ENCODE measurements at regions of chr3 and their contacts with region 1.

Region 1: DNA sequence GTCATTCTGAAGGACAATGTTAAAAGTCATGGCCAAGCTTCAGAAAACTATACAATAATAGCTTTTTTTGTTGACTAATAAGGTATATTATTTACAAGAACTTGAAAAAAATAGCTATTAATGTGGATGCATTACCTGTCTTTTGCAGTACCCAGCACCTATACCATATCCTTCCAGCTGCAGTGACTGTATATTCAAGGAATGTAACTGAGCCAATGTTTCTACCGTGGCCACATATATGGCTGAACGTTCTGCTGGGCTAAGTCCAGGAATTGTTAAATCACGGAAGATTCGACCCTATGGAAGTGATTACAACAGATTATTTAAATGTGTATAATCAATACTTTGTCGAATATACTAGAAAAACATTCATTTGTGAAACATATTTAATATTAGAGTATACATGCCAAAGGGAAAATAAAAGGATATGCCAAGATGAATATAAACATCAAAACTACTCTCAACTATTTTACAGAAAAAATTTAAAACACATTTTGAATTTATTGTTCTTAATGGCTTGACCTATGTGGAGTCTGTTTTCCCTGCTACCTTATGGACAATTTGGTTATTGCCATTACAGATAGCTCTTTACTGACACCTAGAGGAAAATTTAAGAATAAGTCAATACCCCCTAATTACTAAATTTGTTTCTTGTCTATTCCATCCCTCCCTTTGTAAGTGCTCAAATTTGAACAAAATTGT is 17.6 kb downstream of the ACAD11 start:
- DNase-seq: no peak
- ATAC-seq: peak in 1 of 2 donors; percentile 53
- H3K4me3 ChIP-seq: no peak overlapping the region
- H3K27ac ChIP-seq: no peak overlapping the region
- H3K4me1 ChIP-seq: no peaks in the 10 kb centered on the region
- H3K27me3 ChIP-seq: no peaks in the 10 kb centered on the region
- CTCF ChIP-seq: peak; percentile 52 to 84 (median 76)
- POLR2A ChIP-seq: no peak

Region 2: GRCh38 chr3:132535575-132536441 is 106.2 kb before region 1 on chr3:
- in situ Hi-C with region 1: loop called (anchors 5 to 10 kb)
- intact Hi-C with region 1: loop called (anchors 1 kb)
- DNase-seq: peak; percentile 30 to 38
- ATAC-seq: peak; percentile 66 to 80
- H3K4me3 ChIP-seq: no peak overlapping the region
- H3K27ac ChIP-seq: no peak overlapping the region
- H3K4me1 ChIP-seq: no peaks in the 10 kb centered on the region
- H3K27me3 ChIP-seq: no peaks in the 10 kb centered on the region
- CTCF ChIP-seq: peak; percentile 54 to 76 (median 61)
- POLR2A ChIP-seq: no peak

Region 3: GRCh38 chr3:132543036-132543739 is 98.8 kb before region 1 on chr3:
- in situ Hi-C with region 1: loop called (anchors 5 to 10 kb)
- intact Hi-C with region 1: no loop called
- DNase-seq: no peak
- ATAC-seq: no peak
- H3K4me3 ChIP-seq: no peak overlapping the region
- H3K27ac ChIP-seq: no peak overlapping the region
- H3K4me1 ChIP-seq: no peaks in the 10 kb centered on the region
- H3K27me3 ChIP-seq: no peaks in the 10 kb centered on the region
- CTCF ChIP-seq: no peak
- POLR2A ChIP-seq: no peak

Region 4: DNA sequence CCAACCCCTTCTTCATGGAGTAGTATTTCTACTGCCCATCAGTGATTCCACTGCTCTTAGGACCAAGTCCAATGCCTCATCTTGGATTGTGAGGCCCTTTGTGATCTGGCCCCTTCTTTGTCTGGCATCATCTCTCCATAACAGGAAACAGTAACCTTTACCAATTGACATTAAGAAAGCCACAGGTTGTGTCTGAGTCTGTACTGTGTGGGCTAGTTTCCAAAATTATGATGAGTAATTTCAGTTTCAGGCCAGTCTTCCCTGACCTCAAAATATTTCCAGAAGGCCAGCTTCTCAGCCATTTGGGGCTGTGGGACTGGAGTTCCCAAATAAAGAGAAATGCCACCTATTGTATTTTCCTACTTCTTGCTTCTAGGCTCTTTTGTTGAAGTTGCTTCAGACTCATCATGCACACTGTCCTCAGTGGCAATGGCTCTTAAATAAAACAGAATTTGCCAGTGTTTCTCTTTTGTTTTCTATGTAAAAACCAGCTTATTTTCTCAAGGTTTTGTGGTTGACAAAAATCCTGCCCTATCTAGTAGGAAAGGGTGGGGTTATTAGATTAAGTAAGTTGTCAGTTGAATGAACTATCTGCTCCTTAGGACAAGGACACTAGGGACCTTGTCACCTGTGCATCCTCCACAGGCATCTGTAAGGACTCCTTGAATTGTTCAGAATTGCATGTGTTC is 92.0 kb before region 1 on chr3:
- in situ Hi-C with region 1: loop called in 1 of 4 experiments (anchors 10 kb)
- intact Hi-C with region 1: no loop called
- DNase-seq: no peak
- ATAC-seq: no peak
- H3K4me3 ChIP-seq: no peak overlapping the region
- H3K27ac ChIP-seq: no peak overlapping the region
- H3K4me1 ChIP-seq: peaks cover 3 to 6% of the 10 kb centered on the region in 2 donors
- H3K27me3 ChIP-seq: no peaks in the 10 kb centered on the region
- CTCF ChIP-seq: no peak
- POLR2A ChIP-seq: no peak

Region 5: DNA sequence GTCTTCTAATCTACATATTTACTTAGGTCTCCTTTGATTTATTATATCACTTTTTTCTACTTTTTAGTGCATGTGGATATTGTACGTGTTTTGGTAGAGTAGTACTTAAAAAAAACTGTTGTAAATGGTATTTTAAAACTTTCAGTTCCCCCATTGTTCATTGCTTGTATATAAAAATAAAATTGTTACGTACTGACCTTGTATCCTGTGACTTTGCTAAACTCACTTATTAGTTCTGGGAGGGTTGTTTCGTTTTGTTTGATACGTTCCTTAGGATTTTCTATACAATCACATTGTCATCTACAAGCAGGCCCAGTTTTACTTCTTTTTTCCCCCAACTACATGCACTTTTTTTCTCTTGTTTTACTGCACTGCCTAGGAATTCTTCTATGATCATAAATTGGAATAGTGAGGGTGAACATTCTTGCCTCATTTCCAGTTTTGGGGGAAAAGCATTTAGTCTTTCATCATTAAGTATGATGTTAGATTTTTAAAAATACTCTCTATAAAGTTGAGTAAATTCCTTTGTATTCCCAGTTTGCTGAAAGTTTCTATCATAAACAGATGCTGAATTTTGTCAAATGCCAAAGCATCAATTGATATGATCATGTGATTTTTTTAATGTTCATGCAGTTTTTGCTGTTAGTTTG is 78.4 kb before region 1 on chr3:
- in situ Hi-C with region 1: no loop called
- intact Hi-C with region 1: no loop called
- DNase-seq: no peak
- ATAC-seq: no peak
- H3K4me3 ChIP-seq: no peak overlapping the region
- H3K27ac ChIP-seq: no peak overlapping the region
- H3K4me1 ChIP-seq: no peaks in the 10 kb centered on the region
- H3K27me3 ChIP-seq: no peaks in the 10 kb centered on the region
- CTCF ChIP-seq: no peak
- POLR2A ChIP-seq: no peak

Region 6: DNA sequence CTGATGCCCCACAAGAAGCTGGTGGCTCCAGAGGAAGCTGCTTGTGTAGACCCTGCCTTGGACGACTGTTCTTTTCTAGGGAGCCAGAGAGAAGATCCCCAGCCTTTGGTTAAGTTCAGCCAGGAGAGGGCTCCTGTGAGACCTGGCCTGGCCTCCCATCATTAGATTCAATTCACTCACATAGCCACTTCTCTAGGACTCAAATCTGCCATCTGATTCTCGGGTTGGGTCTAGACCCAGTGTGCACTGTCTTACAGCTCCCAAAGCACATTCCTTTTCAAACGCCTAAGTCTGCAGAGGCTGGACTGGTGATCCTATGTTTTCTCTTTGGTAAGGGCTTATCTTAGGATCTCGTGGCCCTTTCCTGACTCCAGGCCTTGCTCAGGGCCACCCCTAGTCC is 161.9 kb after region 1 on chr3:
- in situ Hi-C with region 1: no loop called
- intact Hi-C with region 1: no loop called
- DNase-seq: no peak
- ATAC-seq: no peak
- H3K4me3 ChIP-seq: no peak overlapping the region
- H3K27ac ChIP-seq: no peak overlapping the region
- H3K4me1 ChIP-seq: peaks cover 5 to 10% of the 10 kb centered on the region in 2 donors
- H3K27me3 ChIP-seq: no peaks in the 10 kb centered on the region
- CTCF ChIP-seq: no peak
- POLR2A ChIP-seq: no peak

Measured in gastrocnemius medialis (tissue), 4 donors.